Naive thymus-derived CD4-positive, alpha-beta T cell (primary cell): ENCODE measurements at regions of chr9 and their contacts with region 1.

Region 1: GRCh38 chr9:128881901-128882681 is at the starts of genes KYAT1 and LRRC8A:
- DNase-seq: peak; percentile 95 to 99 (median 97)
- ATAC-seq: peak; percentile 95
- H3K4me3 ChIP-seq: peak within 1 kb of the TSS; percentile 94
- H3K4me3 Mint-ChIP-seq: peak within 1 kb of the TSS; percentile 97 to 99 (median 98)
- H3K27ac ChIP-seq: peak within 1 kb of the TSS; percentile 95
- H3K27ac Mint-ChIP-seq: peak within 1 kb of the TSS; percentile 94 to 99 (median 97)
- H3K4me1 ChIP-seq: peaks cover 24 to 25% of the 10 kb centered on the region in 2 donors
- H3K4me1 Mint-ChIP-seq: peaks cover 45 to 79% (median 61%) of the 10 kb centered on the region in 7 donors
- H3K27me3 ChIP-seq: no peaks in the 10 kb centered on the region
- H3K27me3 Mint-ChIP-seq: no peaks in the 10 kb centered on the region
- total RNA-seq, gene KYAT1: 7.2 to 18.2 (median 14.8) TPM
- total RNA-seq, gene LRRC8A: 31.3 to 48.8 (median 34.5) TPM

Region 2: GRCh38 chr9:128249908-128250838 is 631.9 kb before region 1 on chr9:
- CTCF ChIA-PET with region 1: no interaction called
- POLR2A ChIA-PET with region 1: no interaction called
- intact Hi-C with region 1: loop called in 1 of 2 experiments (anchors 1 kb)
- DNase-seq: peak; percentile 96 to 100 (median 98)
- ATAC-seq: peak; percentile 98
- H3K4me3 ChIP-seq: peak overlapping the region; percentile 83
- H3K4me3 Mint-ChIP-seq: peak overlapping the region; percentile 79 to 93 (median 88)
- H3K27ac ChIP-seq: peak overlapping the region; percentile 72
- H3K27ac Mint-ChIP-seq: peak overlapping the region; percentile 60 to 97 (median 95)
- H3K4me1 ChIP-seq: peaks cover 7 to 9% of the 10 kb centered on the region in 2 donors
- H3K4me1 Mint-ChIP-seq: peaks cover 7 to 28% (median 17%) of the 10 kb centered on the region in 7 donors
- H3K27me3 ChIP-seq: no peaks in the 10 kb centered on the region
- H3K27me3 Mint-ChIP-seq: peaks cover 0 to 39% (median 6%) of the 10 kb centered on the region in 5 donors

Region 3: DNA sequence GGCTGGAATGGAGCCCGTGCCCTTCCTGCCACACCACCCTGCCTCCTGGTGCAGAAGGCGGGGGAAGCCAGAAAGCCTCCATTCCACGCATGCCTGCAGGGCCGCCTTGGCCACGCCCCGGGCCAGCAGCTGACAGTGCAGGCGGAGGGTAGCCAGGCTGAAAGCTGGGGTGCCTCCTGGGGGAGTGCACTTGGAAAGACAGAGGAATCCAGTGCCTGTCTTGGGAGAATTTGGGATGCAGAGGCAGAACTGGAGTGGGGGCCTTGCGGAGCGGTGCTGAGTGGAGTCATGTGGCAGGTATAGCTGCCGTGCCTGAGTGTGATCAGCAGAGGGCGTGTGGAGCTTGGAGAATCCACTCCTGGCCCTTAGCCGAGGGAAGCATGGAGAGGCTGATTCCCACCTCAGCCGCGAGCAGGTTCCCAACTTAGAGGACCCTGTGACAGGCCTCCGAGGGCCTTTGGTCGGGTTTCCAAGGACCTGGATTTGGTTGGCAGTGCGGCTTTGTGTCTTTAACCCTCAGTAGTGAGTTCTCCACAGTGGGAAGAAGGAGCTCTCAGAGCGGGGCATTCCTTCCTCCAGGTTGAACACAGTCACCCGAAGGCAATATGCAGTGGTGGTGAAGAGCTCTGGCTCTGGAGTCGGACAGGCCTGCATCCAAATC is 520.0 kb before region 1 on chr9:
- CTCF ChIA-PET with region 1: no interaction called
- POLR2A ChIA-PET with region 1: no interaction called
- intact Hi-C with region 1: loop called in 1 of 2 experiments (anchors 10 kb)
- DNase-seq: peak; percentile 48 to 69 (median 64)
- ATAC-seq: peak; percentile 94
- H3K4me3 ChIP-seq: peak overlapping the region; percentile 61
- H3K4me3 Mint-ChIP-seq: peak overlapping the region; percentile 68 to 92 (median 87)
- H3K27ac ChIP-seq: peak overlapping the region; percentile 48
- H3K27ac Mint-ChIP-seq: peak overlapping the region in 6 of 9 donors; percentile 57 to 81 (median 74)
- H3K4me1 ChIP-seq: peaks cover 5 to 9% of the 10 kb centered on the region in 2 donors
- H3K4me1 Mint-ChIP-seq: peaks cover 0 to 22% (median 6%) of the 10 kb centered on the region in 7 donors
- H3K27me3 ChIP-seq: no peaks in the 10 kb centered on the region
- H3K27me3 Mint-ChIP-seq: no peaks in the 10 kb centered on the region

Region 4: DNA sequence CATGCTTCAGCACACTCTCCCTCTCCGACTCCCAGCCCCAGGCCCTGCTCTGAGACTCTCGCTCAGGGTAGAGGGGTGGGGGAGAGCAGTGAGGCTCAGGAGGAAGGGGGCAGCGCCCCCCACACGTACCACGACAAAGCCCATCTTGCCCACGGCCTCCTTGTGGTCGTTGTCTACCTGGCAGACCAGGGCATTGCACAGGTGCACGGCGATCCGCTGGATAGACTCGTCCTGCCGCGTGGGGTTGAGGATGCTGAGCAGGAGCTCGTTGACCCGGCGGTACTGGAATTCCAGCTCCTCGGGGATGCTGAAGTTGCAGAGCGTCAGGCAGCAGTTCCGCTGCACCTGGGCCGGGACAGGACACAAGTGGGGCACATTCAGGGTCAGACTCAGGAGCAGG is 139.7 kb before region 1 on chr9:
- CTCF ChIA-PET with region 1: no interaction called
- POLR2A ChIA-PET with region 1: no interaction called
- intact Hi-C with region 1: no loop called
- DNase-seq: no peak
- ATAC-seq: no peak
- H3K4me3 ChIP-seq: no peak overlapping the region
- H3K4me3 Mint-ChIP-seq: no peak overlapping the region
- H3K27ac ChIP-seq: no peak overlapping the region
- H3K27ac Mint-ChIP-seq: no peak overlapping the region
- H3K4me1 ChIP-seq: no peaks in the 10 kb centered on the region
- H3K4me1 Mint-ChIP-seq: peaks cover 0 to 4% (median 0%) of the 10 kb centered on the region in 7 donors
- H3K27me3 ChIP-seq: no peaks in the 10 kb centered on the region
- H3K27me3 Mint-ChIP-seq: no peaks in the 10 kb centered on the region

Region 5: GRCh38 chr9:128786681-128787601 is 95.2 kb before region 1 on chr9 and contains the start of gene TBC1D13:
- CTCF ChIA-PET with region 1: no interaction called
- POLR2A ChIA-PET with region 1: no interaction called
- intact Hi-C with region 1: loop called in 1 of 2 experiments (anchors 1 kb)
- DNase-seq: peak; percentile 88 to 93 (median 92)
- ATAC-seq: peak; percentile 99
- H3K4me3 ChIP-seq: peak within 1 kb of the TSS; percentile 90
- H3K4me3 Mint-ChIP-seq: peak within 1 kb of the TSS; percentile 80 to 98 (median 92)
- H3K27ac ChIP-seq: peak within 1 kb of the TSS; percentile 82
- H3K27ac Mint-ChIP-seq: peak within 1 kb of the TSS; percentile 87 to 98 (median 95)
- H3K4me1 ChIP-seq: peaks cover 13% of the 10 kb centered on the region in 2 donors
- H3K4me1 Mint-ChIP-seq: peaks cover 6 to 29% (median 23%) of the 10 kb centered on the region in 7 donors
- H3K27me3 ChIP-seq: no peaks in the 10 kb centered on the region
- H3K27me3 Mint-ChIP-seq: no peaks in the 10 kb centered on the region
- total RNA-seq, gene TBC1D13: 21.0 to 35.2 (median 24.9) TPM

Region 6: GRCh38 chr9:128845155-128845931 is 36.7 kb before region 1 on chr9:
- CTCF ChIA-PET with region 1: no interaction called
- POLR2A ChIA-PET with region 1: no interaction called
- intact Hi-C with region 1: no loop called
- DNase-seq: no peak
- ATAC-seq: no peak
- H3K4me3 ChIP-seq: no peak overlapping the region
- H3K4me3 Mint-ChIP-seq: no peak overlapping the region
- H3K27ac ChIP-seq: no peak overlapping the region
- H3K27ac Mint-ChIP-seq: no peak overlapping the region
- H3K4me1 ChIP-seq: no peaks in the 10 kb centered on the region
- H3K4me1 Mint-ChIP-seq: peaks cover 0 to 4% (median 0%) of the 10 kb centered on the region in 7 donors
- H3K27me3 ChIP-seq: no peaks in the 10 kb centered on the region
- H3K27me3 Mint-ChIP-seq: no peaks in the 10 kb centered on the region

Region 7: DNA sequence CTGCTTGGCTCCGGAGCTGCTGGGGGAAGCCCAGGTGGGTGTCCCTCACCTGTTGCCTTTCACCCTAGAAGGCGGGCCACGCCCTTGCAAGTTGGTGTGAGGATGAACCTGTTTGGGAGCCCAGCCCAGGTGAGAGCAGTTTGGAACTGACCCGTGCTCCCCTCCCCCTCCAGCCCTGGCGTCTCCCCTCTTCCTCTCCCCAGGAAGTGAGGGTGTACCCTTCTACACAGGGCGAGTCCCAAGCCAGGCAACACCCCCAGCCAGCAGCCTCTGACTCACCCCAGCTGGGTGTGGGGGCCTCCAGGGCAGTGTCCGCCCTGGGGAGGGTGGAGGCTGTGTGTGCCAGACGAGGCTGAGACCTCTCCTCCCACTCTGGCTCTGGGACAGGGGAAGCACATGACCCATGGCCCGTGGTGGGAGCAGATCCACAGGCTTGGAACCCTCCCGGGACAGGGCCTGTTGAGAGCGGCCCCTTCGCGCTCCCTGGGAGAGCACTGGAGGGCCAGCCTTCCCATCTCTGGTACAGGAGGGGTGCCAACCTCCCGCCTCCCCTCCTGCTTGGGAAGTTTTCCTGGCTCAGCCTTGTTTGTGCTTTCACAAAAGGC is 10.3 kb after region 1 on chr9:
- CTCF ChIA-PET with region 1: no interaction called
- POLR2A ChIA-PET with region 1: interaction called, 23 read pairs
- intact Hi-C with region 1: loop called in 1 of 2 experiments (anchors 1 kb)
- DNase-seq: no peak
- ATAC-seq: peak; percentile 70
- H3K4me3 ChIP-seq: no peak overlapping the region
- H3K4me3 Mint-ChIP-seq: peak overlapping the region in 4 of 10 donors; percentile 29 to 77 (median 66)
- H3K27ac ChIP-seq: peak overlapping the region; percentile 62
- H3K27ac Mint-ChIP-seq: peak overlapping the region; percentile 54 to 97 (median 93)
- H3K4me1 ChIP-seq: peaks cover 16 to 46% of the 10 kb centered on the region in 2 donors
- H3K4me1 Mint-ChIP-seq: peaks cover 38 to 79% (median 65%) of the 10 kb centered on the region in 7 donors
- H3K27me3 ChIP-seq: no peaks in the 10 kb centered on the region
- H3K27me3 Mint-ChIP-seq: no peaks in the 10 kb centered on the region

Region 8: GRCh38 chr9:128947422-128948301 is 65.6 kb after region 1 on chr9 and contains the starts of genes DOLK and NUP188:
- CTCF ChIA-PET with region 1: no interaction called
- POLR2A ChIA-PET with region 1: no interaction called
- intact Hi-C with region 1: loop called (anchors 1 kb)
- DNase-seq: peak; percentile 96 to 100 (median 98)
- ATAC-seq: peak; percentile 95
- H3K4me3 ChIP-seq: peak within 1 kb of the TSS; percentile 87
- H3K4me3 Mint-ChIP-seq: peak within 1 kb of the TSS; percentile 93 to 99 (median 98)
- H3K27ac ChIP-seq: peak within 1 kb of the TSS; percentile 97
- H3K27ac Mint-ChIP-seq: peak within 1 kb of the TSS; percentile 89 to 99 (median 97)
- H3K4me1 ChIP-seq: peaks cover 8 to 14% of the 10 kb centered on the region in 2 donors
- H3K4me1 Mint-ChIP-seq: peaks cover 16 to 49% (median 32%) of the 10 kb centered on the region in 7 donors
- H3K27me3 ChIP-seq: no peaks in the 10 kb centered on the region
- H3K27me3 Mint-ChIP-seq: no peaks in the 10 kb centered on the region
- total RNA-seq, gene DOLK: 6.0 to 12.8 (median 9.5) TPM
- total RNA-seq, gene NUP188: 55.7 to 98.7 (median 63.7) TPM

Region 9: DNA sequence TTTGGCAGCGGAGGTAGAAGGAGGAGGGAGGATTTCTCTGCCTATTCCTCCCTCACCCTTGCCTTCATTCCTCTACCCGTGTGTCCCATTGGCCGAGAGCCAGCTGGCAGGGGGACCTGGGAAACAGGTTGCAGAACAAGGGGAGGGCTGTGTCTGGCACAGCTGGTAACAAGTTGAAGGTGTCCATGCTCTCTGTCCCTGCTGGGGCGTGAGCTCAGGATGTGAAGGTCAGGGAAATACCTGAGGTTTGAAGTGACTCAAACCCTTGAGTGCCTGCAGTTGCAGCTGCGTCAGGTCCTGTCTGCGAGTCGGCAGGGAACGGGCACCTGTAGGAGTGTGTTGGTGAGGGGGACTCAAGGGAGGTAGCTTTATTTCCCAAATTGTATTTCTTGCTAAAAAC is 170.5 kb after region 1 on chr9:
- CTCF ChIA-PET with region 1: no interaction called
- POLR2A ChIA-PET with region 1: no interaction called
- intact Hi-C with region 1: no loop called
- DNase-seq: no peak
- ATAC-seq: no peak
- H3K4me3 ChIP-seq: no peak overlapping the region
- H3K4me3 Mint-ChIP-seq: no peak overlapping the region
- H3K27ac ChIP-seq: no peak overlapping the region
- H3K27ac Mint-ChIP-seq: peak overlapping the region in 1 of 9 donors; percentile 62
- H3K4me1 ChIP-seq: no peaks in the 10 kb centered on the region
- H3K4me1 Mint-ChIP-seq: no peaks in the 10 kb centered on the region
- H3K27me3 ChIP-seq: no peaks in the 10 kb centered on the region
- H3K27me3 Mint-ChIP-seq: no peaks in the 10 kb centered on the region

Region 10: DNA sequence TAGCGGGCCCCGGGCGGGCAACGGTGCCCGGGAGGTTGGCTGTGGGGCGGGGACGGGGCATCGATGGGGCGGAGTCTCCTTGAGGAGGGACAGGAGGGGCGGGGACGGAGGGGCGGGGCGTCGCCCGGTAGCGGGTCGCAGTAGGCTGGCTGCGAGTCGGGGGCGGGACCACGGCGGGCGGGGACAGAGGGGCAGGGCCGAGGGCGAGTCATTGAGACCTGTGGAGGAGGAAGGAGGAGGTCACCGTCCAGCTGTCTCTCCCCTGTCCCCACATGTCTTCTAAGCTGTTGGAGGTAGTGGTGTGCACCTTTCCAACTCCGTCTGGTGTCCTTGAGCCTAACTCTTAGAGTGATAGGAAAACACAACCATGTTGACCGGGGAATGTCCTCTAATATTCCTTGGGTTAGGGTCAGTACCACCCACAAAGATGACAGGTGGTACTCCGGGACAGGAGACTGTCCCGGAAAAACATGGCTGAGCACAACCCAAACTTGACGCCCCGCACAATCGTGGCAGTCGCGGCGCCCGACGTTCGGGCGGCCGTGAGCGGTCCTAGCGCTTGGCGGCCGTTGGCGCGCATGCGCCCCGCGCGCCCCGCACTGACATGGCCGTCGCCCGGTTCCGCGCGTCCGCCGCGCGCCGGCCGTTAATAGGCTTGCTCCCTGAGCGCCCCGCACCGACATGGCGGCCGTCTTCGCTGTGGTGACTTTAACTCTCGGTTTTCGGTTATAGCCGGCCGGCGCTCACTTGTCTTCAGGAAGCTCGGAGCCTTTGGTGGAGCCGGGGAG is 228.8 kb after region 1 on chr9 and contains the starts of genes CRAT and PTPA:
- CTCF ChIA-PET with region 1: no interaction called
- POLR2A ChIA-PET with region 1: no interaction called
- intact Hi-C with region 1: loop called in 1 of 2 experiments (anchors 5 kb)
- DNase-seq: peak; percentile 85 to 96 (median 89)
- ATAC-seq: peak; percentile 93
- H3K4me3 ChIP-seq: peak within 1 kb of the TSS; percentile 82
- H3K4me3 Mint-ChIP-seq: peak within 1 kb of the TSS; percentile 88 to 97 (median 92)
- H3K27ac ChIP-seq: peak within 1 kb of the TSS; percentile 87
- H3K27ac Mint-ChIP-seq: peak within 1 kb of the TSS; percentile 83 to 97 (median 94)
- H3K4me1 ChIP-seq: peaks cover 10% of the 10 kb centered on the region in 2 donors
- H3K4me1 Mint-ChIP-seq: peaks cover 26 to 45% (median 29%) of the 10 kb centered on the region in 7 donors
- H3K27me3 ChIP-seq: no peaks in the 10 kb centered on the region
- H3K27me3 Mint-ChIP-seq: no peaks in the 10 kb centered on the region
- total RNA-seq, gene CRAT: 7.2 to 15.6 (median 11.4) TPM
- total RNA-seq, gene PTPA: 45.0 to 110 (median 52.3) TPM